Activated B cell treated with CpG ODN at 0.5 μM for 24 hours (primary cell): ENCODE measurements at regions of chr10 and their contacts with region 1.

Region 1: GRCh38 chr10:110414563-110415309 is 83.0 kb upstream of the DUSP5 start:
- DNase-seq: peak; percentile 72
- ATAC-seq: peak; percentile 89
- H3K4me3 Mint-ChIP-seq: peak overlapping the region; percentile 50
- H3K27ac Mint-ChIP-seq: peak overlapping the region; percentile 65
- H3K4me1 Mint-ChIP-seq: peaks cover 71% of the 10 kb centered on the region
- H3K27me3 Mint-ChIP-seq: peaks cover 6% of the 10 kb centered on the region
- CTCF ChIP-seq: no peak

Region 2: DNA sequence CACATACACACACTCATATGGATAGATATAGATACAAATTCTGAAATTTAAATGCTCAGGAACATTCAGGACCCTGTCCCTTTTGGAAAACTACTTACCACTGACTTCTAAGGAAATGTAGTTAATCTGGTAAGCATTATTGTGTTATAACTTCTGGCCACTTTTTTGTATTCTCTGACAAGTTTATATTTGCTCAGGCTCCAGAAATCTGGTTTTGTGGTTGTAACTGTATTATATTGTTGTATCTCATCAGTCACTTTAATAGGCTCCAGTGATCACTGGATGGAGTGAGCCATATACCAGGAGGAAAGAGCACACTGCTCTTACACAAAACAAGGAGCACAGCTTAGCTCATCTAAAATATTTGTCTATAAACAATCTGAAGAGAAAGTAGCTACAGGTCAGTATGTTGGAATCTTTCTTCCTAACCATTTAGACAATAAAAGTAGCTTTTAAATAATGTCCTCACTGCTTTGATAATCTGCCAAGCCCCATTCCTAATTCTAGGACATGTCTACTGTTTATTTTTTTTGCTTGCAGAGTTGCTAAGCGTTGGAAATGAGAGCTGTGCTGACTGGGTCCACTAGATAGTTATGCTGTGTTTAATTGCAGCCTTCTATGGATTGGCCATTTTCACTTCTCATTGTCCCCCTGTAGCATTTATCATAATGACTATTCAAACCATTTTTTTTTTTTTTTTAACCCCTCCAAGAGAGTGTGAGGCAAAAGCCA is 153.8 kb before region 1 on chr10:
- CTCF ChIA-PET with region 1: no interaction called
- POLR2A ChIA-PET with region 1: no interaction called
- intact Hi-C with region 1: no loop called
- DNase-seq: no peak
- ATAC-seq: no peak
- H3K4me3 Mint-ChIP-seq: no peak overlapping the region
- H3K27ac Mint-ChIP-seq: no peak overlapping the region
- H3K4me1 Mint-ChIP-seq: no peaks in the 10 kb centered on the region
- H3K27me3 Mint-ChIP-seq: no peaks in the 10 kb centered on the region
- CTCF ChIP-seq: no peak

Region 3: GRCh38 chr10:110311357-110311949 is 103.3 kb before region 1 on chr10:
- CTCF ChIA-PET with region 1: interaction called, 4 read pairs
- POLR2A ChIA-PET with region 1: interaction called, 8 read pairs
- intact Hi-C with region 1: loop called (anchors 1 kb)
- DNase-seq: no peak
- ATAC-seq: peak; percentile 83
- H3K4me3 Mint-ChIP-seq: no peak overlapping the region
- H3K27ac Mint-ChIP-seq: peak overlapping the region; percentile 13
- H3K4me1 Mint-ChIP-seq: peaks cover 19% of the 10 kb centered on the region
- H3K27me3 Mint-ChIP-seq: no peaks in the 10 kb centered on the region
- CTCF ChIP-seq: no peak

Region 4: DNA sequence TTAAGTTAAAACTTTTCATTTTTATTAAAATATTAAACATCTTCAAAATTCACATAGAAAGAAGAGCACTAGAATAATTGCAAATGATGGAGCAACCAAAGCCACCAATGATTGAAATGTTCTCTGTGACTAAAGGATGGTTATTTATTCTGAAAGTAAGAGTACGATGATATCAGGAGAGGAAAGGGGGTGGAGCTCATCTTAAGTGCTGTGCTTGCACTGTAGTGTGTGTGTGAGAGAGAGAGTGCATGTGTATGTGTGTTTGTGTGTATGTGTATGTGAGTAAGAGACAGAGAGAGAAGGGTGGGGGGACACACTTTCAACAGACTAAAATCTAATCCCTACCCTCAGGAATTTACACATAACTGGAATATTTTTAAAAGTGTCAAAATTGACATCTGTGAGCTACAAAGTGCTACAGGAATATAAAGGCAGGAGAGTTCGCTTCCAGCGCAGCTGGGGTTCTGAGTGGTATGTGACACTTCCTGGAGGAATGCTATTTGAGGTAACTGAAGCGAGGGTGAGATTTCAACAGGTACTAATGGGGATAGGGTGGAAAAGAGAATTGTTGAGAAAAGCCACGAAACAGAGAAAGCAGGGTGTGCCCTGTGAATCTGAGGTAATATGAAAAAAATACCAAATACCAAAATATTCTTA is 52.8 kb before region 1 on chr10:
- CTCF ChIA-PET with region 1: interaction called, 49 read pairs
- POLR2A ChIA-PET with region 1: interaction called, 328 read pairs
- intact Hi-C with region 1: no loop called
- DNase-seq: no peak
- ATAC-seq: no peak
- H3K4me3 Mint-ChIP-seq: no peak overlapping the region
- H3K27ac Mint-ChIP-seq: no peak overlapping the region
- H3K4me1 Mint-ChIP-seq: peaks cover 45% of the 10 kb centered on the region
- H3K27me3 Mint-ChIP-seq: no peaks in the 10 kb centered on the region
- CTCF ChIP-seq: no peak

Region 5: DNA sequence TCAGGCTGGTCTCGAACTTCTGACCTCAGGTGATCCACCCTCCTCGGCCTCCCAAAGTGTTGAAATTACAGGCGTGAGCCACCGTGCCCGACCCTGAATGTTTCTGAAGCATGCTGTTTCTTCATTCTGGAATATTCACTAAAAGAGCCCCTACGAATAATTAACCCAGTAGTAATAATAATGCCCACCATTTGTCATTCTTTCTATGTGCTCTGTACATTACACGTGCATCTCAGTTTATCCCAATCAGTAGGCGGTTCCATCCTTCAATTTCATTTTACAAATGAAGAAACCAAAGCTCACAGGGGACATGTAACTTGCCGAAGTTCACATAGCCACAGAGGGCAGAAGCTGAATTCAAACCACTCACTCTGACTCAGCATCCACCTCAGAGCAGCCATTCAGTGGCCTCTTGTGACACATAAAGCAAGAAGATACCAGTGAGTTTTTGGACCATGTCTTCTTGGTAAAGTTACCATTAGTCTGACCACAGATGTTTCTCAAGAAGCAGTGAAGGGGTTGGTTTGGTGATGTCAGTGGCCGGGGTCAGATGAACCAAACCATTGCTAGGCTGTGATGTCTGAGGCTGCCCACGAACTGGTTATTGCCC is 11.1 kb after region 1 on chr10:
- CTCF ChIA-PET with region 1: interaction called, 4 read pairs
- POLR2A ChIA-PET with region 1: interaction called, 23 read pairs
- intact Hi-C with region 1: loop called (anchors 1 kb)
- DNase-seq: no peak
- ATAC-seq: peak; percentile 78
- H3K4me3 Mint-ChIP-seq: no peak overlapping the region
- H3K27ac Mint-ChIP-seq: peak overlapping the region; percentile 38
- H3K4me1 Mint-ChIP-seq: peaks cover 41% of the 10 kb centered on the region
- H3K27me3 Mint-ChIP-seq: peaks cover 7% of the 10 kb centered on the region
- CTCF ChIP-seq: no peak

Region 6: DNA sequence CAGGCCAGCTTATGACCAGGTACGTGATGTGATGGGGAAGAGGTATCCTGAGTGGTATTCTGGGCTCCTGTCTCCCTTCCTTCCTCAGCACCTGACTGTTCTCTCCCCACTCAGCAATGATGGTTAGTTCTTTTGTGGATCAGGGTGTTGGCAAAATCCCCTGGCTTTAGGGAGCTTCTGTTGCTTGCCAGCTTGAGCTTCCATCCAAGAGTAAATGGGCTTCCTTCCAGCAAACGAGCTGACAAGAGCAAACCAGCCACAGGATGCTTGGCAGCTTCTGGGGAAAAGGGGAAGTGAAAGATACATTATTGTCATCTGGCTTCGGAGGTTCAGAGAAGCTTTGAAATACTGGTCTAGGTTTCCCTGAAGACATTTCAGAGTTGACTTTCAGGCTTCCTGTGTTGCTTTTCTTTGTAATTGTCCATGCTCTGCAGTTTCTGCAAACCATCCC is 88.1 kb after region 1 on chr10:
- CTCF ChIA-PET with region 1: interaction called, 5 read pairs
- POLR2A ChIA-PET with region 1: interaction called, 81 read pairs
- intact Hi-C with region 1: loop called (anchors 1 kb)
- DNase-seq: no peak
- ATAC-seq: peak; percentile 53
- H3K4me3 Mint-ChIP-seq: peak overlapping the region; percentile 72
- H3K27ac Mint-ChIP-seq: peak overlapping the region; percentile 90
- H3K4me1 Mint-ChIP-seq: peaks cover 76% of the 10 kb centered on the region
- H3K27me3 Mint-ChIP-seq: no peaks in the 10 kb centered on the region
- CTCF ChIP-seq: no peak

Region 7: GRCh38 chr10:110567201-110568054 is 152.7 kb after region 1 on chr10 and contains the start of gene SMC3:
- CTCF ChIA-PET with region 1: no interaction called
- POLR2A ChIA-PET with region 1: no interaction called
- intact Hi-C with region 1: loop called (anchors 1 kb)
- DNase-seq: peak; percentile 89
- ATAC-seq: peak; percentile 88
- H3K4me3 Mint-ChIP-seq: peak within 1 kb of the TSS; percentile 91
- H3K27ac Mint-ChIP-seq: peak within 1 kb of the TSS; percentile 98
- H3K4me1 Mint-ChIP-seq: peaks cover 41% of the 10 kb centered on the region
- H3K27me3 Mint-ChIP-seq: no peaks in the 10 kb centered on the region
- CTCF ChIP-seq: no peak
- total RNA-seq, gene SMC3: 41.1 and 43.3 TPM in 2 replicates